Left lung (tissue), 14 donors: ENCODE measurements at regions of chr11 and their contacts with region 1.

Region 1: DNA sequence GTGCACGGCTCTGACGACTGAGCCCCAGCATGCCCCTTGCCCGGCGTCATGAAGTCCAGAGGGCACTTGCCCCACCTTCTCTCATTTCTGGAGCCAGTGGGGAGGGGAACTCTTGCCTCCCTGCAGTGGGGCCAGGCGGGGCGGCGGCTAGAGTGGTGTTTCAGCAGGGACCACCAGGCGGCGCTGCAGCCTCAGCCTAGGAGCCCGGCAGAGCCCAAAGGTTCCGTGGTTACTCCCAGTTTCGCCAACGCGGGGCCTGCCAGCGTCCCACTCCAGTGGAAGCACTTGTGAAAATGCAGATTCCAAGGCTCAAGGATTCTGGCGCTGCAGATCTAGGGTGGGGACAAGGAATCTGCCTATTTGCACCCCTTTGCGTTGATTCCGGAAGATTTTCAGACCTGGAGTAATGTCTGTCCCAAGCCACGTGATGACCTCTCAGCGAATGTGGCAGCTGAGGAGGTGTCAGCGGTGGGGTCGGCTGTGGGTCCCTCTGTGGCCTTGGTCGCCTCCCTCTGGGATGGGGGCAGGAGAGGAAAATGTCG is 55.7 kb downstream of the CD82 start:
- DNase-seq: peak; percentile 59 to 94 (median 70)
- ATAC-seq: peak; percentile 85
- H3K4me3 ChIP-seq: no peak overlapping the region
- H3K27ac ChIP-seq: no peak overlapping the region
- H3K4me1 ChIP-seq: peaks cover 0 to 43% of the 10 kb centered on the region in 2 donors
- H3K27me3 ChIP-seq: no peaks in the 10 kb centered on the region
- CTCF ChIP-seq: peak; percentile 90 to 92

Region 2: DNA sequence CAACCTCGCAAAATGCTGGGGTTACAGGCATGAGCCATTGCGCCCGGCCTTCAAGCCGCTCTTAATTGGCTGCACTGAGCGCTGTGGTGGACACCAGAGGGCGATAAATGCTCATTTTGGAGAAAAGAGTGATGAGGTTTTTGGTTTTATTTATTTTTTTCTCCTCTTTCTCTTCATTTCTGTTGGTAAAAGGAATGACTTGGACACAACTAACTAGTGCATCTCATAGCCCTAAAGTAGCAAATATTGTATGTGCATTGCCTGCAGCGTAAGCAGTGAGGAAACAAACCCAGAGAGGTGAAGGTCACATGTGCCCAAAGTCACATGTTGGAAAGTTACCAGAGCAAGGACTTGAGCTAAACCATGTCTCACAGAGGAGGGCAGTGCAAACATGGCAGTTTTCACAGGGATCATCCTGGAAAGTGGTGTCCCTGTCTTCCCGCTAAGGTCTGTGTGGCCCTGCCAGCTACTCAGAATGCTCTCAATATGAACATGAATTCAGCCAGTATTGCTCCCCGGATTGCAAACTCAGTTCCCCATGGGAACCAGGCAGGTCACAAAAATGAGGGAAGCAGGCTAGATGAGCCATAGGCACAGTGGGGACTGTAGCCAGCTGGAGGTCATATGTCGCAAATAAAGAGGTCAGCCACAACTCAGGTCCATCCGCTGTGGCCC is 64.3 kb before region 1 on chr11:
- intact Hi-C with region 1: loop called in 1 of 2 experiments (anchors 5 kb)
- DNase-seq: peak in 3 of 4 donors; percentile 60 to 85 (median 68)
- ATAC-seq: peak; percentile 87
- H3K4me3 ChIP-seq: no peak overlapping the region
- H3K27ac ChIP-seq: peak overlapping the region in 1 of 2 donors; percentile 30
- H3K4me1 ChIP-seq: peaks cover 0 to 28% of the 10 kb centered on the region in 2 donors
- H3K27me3 ChIP-seq: no peaks in the 10 kb centered on the region
- CTCF ChIP-seq: peak; percentile 68 to 73

Region 3: GRCh38 chr11:44727373-44728287 is 106.4 kb after region 1 on chr11:
- intact Hi-C with region 1: loop called in 1 of 2 experiments (anchors 10 kb)
- DNase-seq: peak; percentile 75 to 94 (median 83)
- ATAC-seq: peak; percentile 93
- H3K4me3 ChIP-seq: peak overlapping the region; percentile 47 to 50
- H3K27ac ChIP-seq: peak overlapping the region; percentile 13 to 78
- H3K4me1 ChIP-seq: peaks cover 0 to 25% of the 10 kb centered on the region in 2 donors
- H3K27me3 ChIP-seq: peaks cover 6 to 54% of the 10 kb centered on the region in 2 donors
- CTCF ChIP-seq: peak; percentile 91 to 97

Region 4: GRCh38 chr11:44785856-44786606 is 164.8 kb after region 1 on chr11:
- intact Hi-C with region 1: no loop called
- DNase-seq: no peak
- ATAC-seq: no peak
- H3K4me3 ChIP-seq: no peak overlapping the region
- H3K27ac ChIP-seq: no peak overlapping the region
- H3K4me1 ChIP-seq: peaks cover 0 to under 1% of the 10 kb centered on the region in 2 donors
- H3K27me3 ChIP-seq: no peaks in the 10 kb centered on the region
- CTCF ChIP-seq: no peak

Region 5: DNA sequence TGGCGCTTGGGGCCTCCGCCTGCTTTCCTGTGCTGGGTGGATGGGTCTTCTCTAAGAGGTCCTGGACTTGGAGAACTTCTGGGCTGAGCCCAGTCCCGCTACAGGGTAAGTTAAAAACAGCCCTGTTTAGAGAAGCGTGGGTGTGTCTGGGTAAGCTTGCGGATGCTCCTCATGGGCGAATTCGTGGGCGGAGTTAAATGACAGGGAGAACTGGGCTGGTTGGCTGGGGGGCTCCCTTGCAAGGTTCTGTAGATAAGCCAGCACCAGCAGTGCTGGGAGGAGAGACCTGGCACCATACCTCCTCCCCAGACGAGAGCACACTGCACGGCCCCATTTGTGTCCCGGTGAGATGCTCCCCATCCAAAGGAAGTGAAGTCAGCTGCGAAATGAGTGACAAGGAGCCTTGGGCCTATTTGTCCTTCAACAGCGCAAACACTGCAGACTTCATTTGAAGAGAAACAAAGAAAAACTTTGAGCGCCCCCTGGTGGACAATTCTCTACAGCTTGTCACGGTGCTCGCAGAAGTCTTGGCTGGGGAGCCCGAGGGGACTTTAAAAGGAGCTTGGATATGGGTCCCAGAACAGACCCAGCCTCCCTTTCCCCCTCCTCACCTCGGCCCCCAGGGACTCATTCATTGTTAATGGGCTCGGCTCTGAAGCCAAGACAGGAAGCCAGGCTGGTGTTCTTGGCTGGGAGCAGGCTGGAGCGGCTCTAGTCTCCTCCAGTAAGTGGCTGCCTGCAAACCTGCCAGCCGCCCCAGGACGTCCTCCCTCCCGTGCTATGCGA is 290.0 kb after region 1 on chr11:
- intact Hi-C with region 1: loop called in 1 of 2 experiments (anchors 5 kb)
- DNase-seq: peak; percentile 72 to 89 (median 78)
- ATAC-seq: peak; percentile 90
- H3K4me3 ChIP-seq: no peak overlapping the region
- H3K27ac ChIP-seq: no peak overlapping the region
- H3K4me1 ChIP-seq: peaks cover 0 to 23% of the 10 kb centered on the region in 2 donors
- H3K27me3 ChIP-seq: peaks cover 0 to 5% of the 10 kb centered on the region in 2 donors
- CTCF ChIP-seq: peak; percentile 86 to 89